Naive thymus-derived CD4-positive, alpha-beta T cell (primary cell): ENCODE measurements at regions of chr5 and their contacts with region 1.

Region 1: DNA sequence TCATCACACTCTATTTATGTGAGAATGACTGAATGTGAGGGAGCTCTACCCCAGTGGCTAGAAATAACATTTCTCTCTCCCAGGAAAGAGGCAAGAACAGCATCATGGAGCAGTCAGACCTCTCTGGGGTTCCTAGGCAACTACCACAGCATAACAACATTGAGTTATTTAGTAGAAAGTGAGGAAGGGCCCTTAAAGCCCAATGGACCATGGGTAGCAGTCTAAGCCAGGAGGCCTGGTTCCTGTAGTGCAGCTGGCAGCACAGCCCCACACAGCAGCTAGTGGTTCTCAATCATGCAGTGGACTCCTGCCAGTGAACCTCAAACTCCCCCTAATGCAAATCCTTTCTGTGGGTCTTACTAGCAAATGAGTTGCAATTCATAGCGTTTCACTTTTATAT is 55.3 kb downstream of the SPEF2 start:
- DNase-seq: peak in 8 of 9 donors; percentile 30 to 68 (median 52)
- ATAC-seq: peak; percentile 88
- H3K4me3 ChIP-seq: peak overlapping the region; percentile 14
- H3K4me3 Mint-ChIP-seq: peak overlapping the region in 9 of 10 donors; percentile 47 to 81 (median 66)
- H3K27ac ChIP-seq: peak overlapping the region; percentile 62
- H3K27ac Mint-ChIP-seq: peak overlapping the region; percentile 87 to 96 (median 92)
- H3K4me1 ChIP-seq: peaks cover 36 to 41% of the 10 kb centered on the region in 2 donors
- H3K4me1 Mint-ChIP-seq: peaks cover 20 to 88% (median 75%) of the 10 kb centered on the region in 7 donors
- H3K27me3 ChIP-seq: no peaks in the 10 kb centered on the region
- H3K27me3 Mint-ChIP-seq: no peaks in the 10 kb centered on the region

Region 2: GRCh38 chr5:35617435-35618303 is 55.3 kb before region 1 on chr5 and contains the start of gene SPEF2:
- CTCF ChIA-PET with region 1: interaction called, 6 read pairs
- POLR2A ChIA-PET with region 1: no interaction called
- intact Hi-C with region 1: loop called in 1 of 2 experiments (anchors 1 kb)
- DNase-seq: peak; percentile 57 to 76 (median 71)
- ATAC-seq: peak; percentile 95
- H3K4me3 ChIP-seq: peak within 1 kb of the TSS; percentile 95
- H3K4me3 Mint-ChIP-seq: peak within 1 kb of the TSS; percentile 91 to 96 (median 94)
- H3K27ac ChIP-seq: peak within 1 kb of the TSS; percentile 27
- H3K27ac Mint-ChIP-seq: peak within 1 kb of the TSS; percentile 79 to 96 (median 89)
- H3K4me1 ChIP-seq: peaks cover 4 to 12% of the 10 kb centered on the region in 2 donors
- H3K4me1 Mint-ChIP-seq: peaks cover 14 to 34% (median 26%) of the 10 kb centered on the region in 7 donors
- H3K27me3 ChIP-seq: no peaks in the 10 kb centered on the region
- H3K27me3 Mint-ChIP-seq: no peaks in the 10 kb centered on the region
- total RNA-seq, gene SPEF2: 7.1 to 13.5 (median 9.9) TPM

Region 3: GRCh38 chr5:35651002-35651756 is 21.8 kb before region 1 on chr5:
- CTCF ChIA-PET with region 1: interaction called, 18 read pairs
- POLR2A ChIA-PET with region 1: interaction called, 4 read pairs
- intact Hi-C with region 1: loop called in 1 of 2 experiments (anchors 2 kb)
- DNase-seq: peak; percentile 10 to 71 (median 64)
- ATAC-seq: peak; percentile 82
- H3K4me3 ChIP-seq: no peak overlapping the region
- H3K4me3 Mint-ChIP-seq: no peak overlapping the region
- H3K27ac ChIP-seq: no peak overlapping the region
- H3K27ac Mint-ChIP-seq: peak overlapping the region in 5 of 9 donors; percentile 2 to 74 (median 42)
- H3K4me1 ChIP-seq: peaks cover 0 to 6% of the 10 kb centered on the region in 2 donors
- H3K4me1 Mint-ChIP-seq: peaks cover 0 to 16% (median 11%) of the 10 kb centered on the region in 7 donors
- H3K27me3 ChIP-seq: no peaks in the 10 kb centered on the region
- H3K27me3 Mint-ChIP-seq: no peaks in the 10 kb centered on the region

Region 4: DNA sequence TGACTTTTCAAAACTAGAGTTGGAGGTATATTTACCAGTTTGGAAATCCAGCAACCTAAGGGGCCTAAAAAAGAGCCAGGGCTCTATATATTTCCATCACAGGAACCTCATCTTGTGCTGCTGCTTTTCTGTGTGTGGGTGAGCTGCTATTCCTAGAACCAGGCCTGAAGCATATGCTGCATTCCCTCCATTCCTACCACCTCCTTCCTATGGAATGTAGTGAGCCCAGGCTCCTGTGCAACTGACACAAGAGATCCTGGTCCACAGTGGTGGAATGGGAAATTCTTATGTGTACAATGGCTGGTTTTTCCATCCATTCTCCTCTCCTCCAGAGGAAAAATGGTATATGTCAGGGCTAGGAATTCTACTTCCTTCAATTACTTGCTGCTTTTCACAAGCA is 16.3 kb before region 1 on chr5:
- CTCF ChIA-PET with region 1: interaction called, 18 read pairs
- POLR2A ChIA-PET with region 1: interaction called, 9 read pairs
- intact Hi-C with region 1: loop called (anchors 1 to 2 kb)
- DNase-seq: no peak
- ATAC-seq: no peak
- H3K4me3 ChIP-seq: no peak overlapping the region
- H3K4me3 Mint-ChIP-seq: no peak overlapping the region
- H3K27ac ChIP-seq: no peak overlapping the region
- H3K27ac Mint-ChIP-seq: peak overlapping the region in 2 of 9 donors; percentile 16 to 45
- H3K4me1 ChIP-seq: peaks cover 0 to 5% of the 10 kb centered on the region in 2 donors
- H3K4me1 Mint-ChIP-seq: peaks cover 7 to 34% (median 19%) of the 10 kb centered on the region in 7 donors
- H3K27me3 ChIP-seq: no peaks in the 10 kb centered on the region
- H3K27me3 Mint-ChIP-seq: no peaks in the 10 kb centered on the region

Region 5: GRCh38 chr5:35762368-35762767 is 89.4 kb after region 1 on chr5:
- CTCF ChIA-PET with region 1: no interaction called
- POLR2A ChIA-PET with region 1: no interaction called
- intact Hi-C with region 1: loop called in 1 of 2 experiments (anchors 5 kb)
- DNase-seq: no peak
- ATAC-seq: no peak
- H3K4me3 ChIP-seq: no peak overlapping the region
- H3K4me3 Mint-ChIP-seq: no peak overlapping the region
- H3K27ac ChIP-seq: no peak overlapping the region
- H3K27ac Mint-ChIP-seq: peak overlapping the region in 3 of 9 donors; percentile 32 to 87 (median 43)
- H3K4me1 ChIP-seq: peaks cover 0 to 11% of the 10 kb centered on the region in 2 donors
- H3K4me1 Mint-ChIP-seq: peaks cover 0 to 80% (median 38%) of the 10 kb centered on the region in 7 donors
- H3K27me3 ChIP-seq: no peaks in the 10 kb centered on the region
- H3K27me3 Mint-ChIP-seq: peaks cover 0 to 3% (median 0%) of the 10 kb centered on the region in 5 donors

Region 6: DNA sequence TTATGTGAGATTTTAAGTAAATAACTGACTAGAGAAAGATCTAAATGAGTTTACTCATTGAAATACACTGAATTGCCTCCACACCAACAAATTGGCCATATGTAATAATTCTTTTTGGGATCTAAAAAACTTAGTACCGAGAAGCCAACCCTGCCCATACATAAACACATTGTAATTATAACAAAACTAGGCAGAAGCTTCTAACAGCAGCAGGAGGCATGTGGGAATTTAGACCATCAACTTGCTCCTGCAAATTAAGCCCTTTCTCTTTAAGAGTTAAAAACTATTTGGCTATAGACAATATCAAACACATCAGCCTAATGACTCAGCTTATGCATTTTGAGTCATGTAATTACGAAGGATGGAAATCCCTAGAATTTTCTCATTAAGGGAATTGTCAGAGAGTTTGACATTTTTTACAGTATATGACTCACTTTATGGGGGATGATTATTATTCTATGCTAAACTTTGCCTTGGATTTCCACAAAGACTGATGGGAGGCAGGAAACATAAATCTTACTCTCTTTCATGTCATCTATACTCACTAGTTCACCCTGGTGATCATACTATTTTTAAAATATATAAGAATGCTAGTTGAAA is 184.7 kb after region 1 on chr5:
- CTCF ChIA-PET with region 1: interaction called, 3 read pairs
- POLR2A ChIA-PET with region 1: interaction called, 10 read pairs
- intact Hi-C with region 1: loop called (anchors 1 kb)
- DNase-seq: peak in 1 of 9 donors; percentile 41
- ATAC-seq: no peak
- H3K4me3 ChIP-seq: peak overlapping the region; percentile 80
- H3K4me3 Mint-ChIP-seq: peak overlapping the region; percentile 82 to 100 (median 94)
- H3K27ac ChIP-seq: peak overlapping the region; percentile 98
- H3K27ac Mint-ChIP-seq: peak overlapping the region; percentile 96 to 100 (median 99)
- H3K4me1 ChIP-seq: peaks cover 40 to 50% of the 10 kb centered on the region in 2 donors
- H3K4me1 Mint-ChIP-seq: peaks cover 25 to 73% (median 63%) of the 10 kb centered on the region in 7 donors
- H3K27me3 ChIP-seq: no peaks in the 10 kb centered on the region
- H3K27me3 Mint-ChIP-seq: no peaks in the 10 kb centered on the region

Region 7: GRCh38 chr5:35902046-35902676 is 229.2 kb after region 1 on chr5:
- CTCF ChIA-PET with region 1: no interaction called
- POLR2A ChIA-PET with region 1: no interaction called
- intact Hi-C with region 1: loop called in 1 of 2 experiments (anchors 1 kb)
- DNase-seq: no peak
- ATAC-seq: peak; percentile 48
- H3K4me3 ChIP-seq: no peak overlapping the region
- H3K4me3 Mint-ChIP-seq: peak overlapping the region in 1 of 10 donors; percentile 57
- H3K27ac ChIP-seq: no peak overlapping the region
- H3K27ac Mint-ChIP-seq: peak overlapping the region in 2 of 9 donors; percentile 25 to 40
- H3K4me1 ChIP-seq: peaks cover 10 to 12% of the 10 kb centered on the region in 2 donors
- H3K4me1 Mint-ChIP-seq: peaks cover 28 to 76% (median 63%) of the 10 kb centered on the region in 7 donors
- H3K27me3 ChIP-seq: no peaks in the 10 kb centered on the region
- H3K27me3 Mint-ChIP-seq: no peaks in the 10 kb centered on the region

Region 8: DNA sequence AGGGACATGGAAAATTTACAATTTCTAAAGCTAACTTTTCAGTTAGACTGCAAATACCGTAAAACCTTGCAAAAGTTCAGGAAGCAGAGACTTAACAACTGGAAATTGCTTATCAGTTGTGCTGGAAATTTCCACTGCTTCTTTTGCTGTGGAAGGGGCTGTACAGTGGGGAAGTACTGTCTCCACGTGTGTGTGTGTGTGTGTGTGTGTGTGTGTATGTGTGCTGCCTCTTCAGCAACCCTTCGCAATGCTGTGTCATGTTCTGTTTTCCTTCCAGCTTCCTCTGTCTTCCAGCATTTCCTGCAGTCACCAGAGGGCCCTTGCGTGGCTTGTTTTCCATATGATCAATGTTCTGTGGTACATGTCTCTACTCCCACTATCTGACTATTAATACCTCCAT is 716.2 kb after region 1 on chr5:
- CTCF ChIA-PET with region 1: no interaction called
- POLR2A ChIA-PET with region 1: no interaction called
- intact Hi-C with region 1: no loop called
- DNase-seq: no peak
- ATAC-seq: peak; percentile 61
- H3K4me3 ChIP-seq: no peak overlapping the region
- H3K4me3 Mint-ChIP-seq: no peak overlapping the region
- H3K27ac ChIP-seq: no peak overlapping the region
- H3K27ac Mint-ChIP-seq: no peak overlapping the region
- H3K4me1 ChIP-seq: no peaks in the 10 kb centered on the region
- H3K4me1 Mint-ChIP-seq: peaks cover 0 to 11% (median 0%) of the 10 kb centered on the region in 7 donors
- H3K27me3 ChIP-seq: no peaks in the 10 kb centered on the region
- H3K27me3 Mint-ChIP-seq: peaks cover 18 to 48% (median 30%) of the 10 kb centered on the region in 5 donors